Calu3 (cell line): ENCODE measurements at regions of chr4 and their contacts with region 1.

Region 1: DNA sequence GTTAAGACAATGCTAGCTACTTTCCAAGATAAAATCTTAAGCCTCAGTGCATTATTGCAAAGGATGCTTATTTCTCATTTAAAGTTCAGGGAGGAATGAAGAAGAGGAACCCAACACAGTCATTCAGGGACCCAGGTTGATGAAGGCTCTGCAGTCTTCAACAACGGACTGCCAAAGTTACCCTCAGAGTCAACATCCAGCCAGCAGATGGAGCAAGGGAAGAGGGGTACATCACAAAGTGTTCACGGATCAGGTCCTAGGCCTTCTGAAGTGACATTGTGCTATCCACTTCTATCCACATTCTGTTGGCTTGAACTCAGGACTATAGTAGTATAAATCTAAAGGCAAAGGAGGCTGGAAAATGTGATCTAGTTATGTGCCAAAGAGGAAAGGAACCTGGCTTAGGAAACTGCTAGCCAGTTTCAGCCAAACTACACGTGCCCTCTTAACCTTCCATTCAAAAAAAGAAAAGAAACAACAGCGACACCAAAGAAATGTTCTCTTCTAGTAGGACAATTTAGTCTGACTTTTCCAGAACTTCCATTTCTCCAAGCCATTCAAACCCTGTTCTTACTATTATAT is 28.8 kb downstream of the NKX6-1 start:
- DNase-seq: peak; percentile 18
- H3K4me3 Mint-ChIP-seq: no peak overlapping the region
- H3K27ac Mint-ChIP-seq: no peak overlapping the region
- H3K4me1 Mint-ChIP-seq: no peaks in the 10 kb centered on the region
- H3K27me3 Mint-ChIP-seq: no peaks in the 10 kb centered on the region
- CTCF ChIP-seq: no peak

Region 2: GRCh38 chr4:84529169-84529751 is 59.0 kb after region 1 on chr4:
- CTCF ChIA-PET with region 1: no interaction called
- intact Hi-C with region 1: loop called (anchors 1 kb)
- DNase-seq: no peak
- H3K4me3 Mint-ChIP-seq: no peak overlapping the region
- H3K27ac Mint-ChIP-seq: no peak overlapping the region
- H3K4me1 Mint-ChIP-seq: no peaks in the 10 kb centered on the region
- H3K27me3 Mint-ChIP-seq: no peaks in the 10 kb centered on the region
- CTCF ChIP-seq: peak; percentile 21

Region 3: DNA sequence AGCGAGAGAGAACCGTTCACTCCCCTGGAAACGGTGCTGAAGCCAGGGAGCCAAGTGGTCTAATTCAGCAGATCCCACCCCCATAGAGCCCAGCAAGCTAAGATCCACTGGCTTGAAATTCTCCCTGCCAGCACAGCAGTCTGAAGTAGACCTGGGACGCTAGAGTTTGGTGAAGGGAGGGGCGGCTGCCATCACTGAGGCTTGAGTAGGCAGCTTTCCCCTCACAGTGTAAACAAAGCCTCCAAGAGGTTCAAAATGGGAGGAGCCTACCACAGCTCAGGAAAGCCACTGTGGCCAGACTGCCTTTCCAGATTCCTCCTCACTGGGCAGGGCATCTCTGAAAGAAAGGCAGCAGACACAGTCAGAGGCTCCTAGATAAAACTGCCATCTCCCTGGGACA is 74.8 kb after region 1 on chr4:
- CTCF ChIA-PET with region 1: no interaction called
- intact Hi-C with region 1: no loop called
- DNase-seq: no peak
- H3K4me3 Mint-ChIP-seq: no peak overlapping the region
- H3K27ac Mint-ChIP-seq: no peak overlapping the region
- H3K4me1 Mint-ChIP-seq: no peaks in the 10 kb centered on the region
- H3K27me3 Mint-ChIP-seq: no peaks in the 10 kb centered on the region
- CTCF ChIP-seq: no peak